Dorsolateral prefrontal cortex (tissue), 120 donors: ENCODE measurements at regions of chr1 and their contacts with region 1.

Region 1: DNA sequence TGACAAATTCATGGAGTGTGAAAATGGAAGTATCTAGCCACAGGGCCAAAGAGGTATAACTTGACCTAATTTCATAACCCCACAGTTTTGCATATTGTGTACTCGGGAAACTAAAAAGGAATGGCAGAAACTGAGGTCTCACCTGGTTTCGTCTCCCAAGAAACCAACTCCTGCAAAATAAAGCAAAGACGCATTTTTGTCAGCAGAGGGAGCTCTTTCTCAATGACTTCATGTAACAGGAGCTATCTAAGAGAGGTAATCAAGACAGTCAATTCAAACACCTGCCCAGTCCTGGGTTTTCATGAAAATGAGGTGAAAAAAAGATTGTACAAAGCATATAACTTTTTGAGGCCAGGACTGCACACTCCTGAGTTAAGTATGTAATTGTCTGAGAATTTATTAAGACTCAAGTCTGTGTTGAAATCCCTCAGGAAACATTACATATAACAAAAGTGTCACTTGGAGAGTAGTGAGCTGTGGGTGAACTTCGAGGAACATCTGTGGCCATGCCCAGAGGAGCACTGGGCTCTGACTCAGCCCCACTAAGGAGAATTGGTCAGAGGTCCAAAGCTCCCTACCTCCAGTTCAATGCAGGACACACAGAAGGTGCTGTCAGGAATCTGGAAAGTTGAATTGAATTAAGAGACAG is 17.6 kb downstream of the FCRL4 start:
- DNase-seq: peak in 1 of 10 donors; percentile 6
- H3K4me3 ChIP-seq: no peak overlapping the region
- H3K27ac ChIP-seq: no peak overlapping the region
- H3K27me3 ChIP-seq: peaks cover 0 to 22% (median 5%) of the 10 kb centered on the region in 45 donors
- CTCF ChIP-seq: peak; percentile 31 to 84 (median 69)

Region 2: DNA sequence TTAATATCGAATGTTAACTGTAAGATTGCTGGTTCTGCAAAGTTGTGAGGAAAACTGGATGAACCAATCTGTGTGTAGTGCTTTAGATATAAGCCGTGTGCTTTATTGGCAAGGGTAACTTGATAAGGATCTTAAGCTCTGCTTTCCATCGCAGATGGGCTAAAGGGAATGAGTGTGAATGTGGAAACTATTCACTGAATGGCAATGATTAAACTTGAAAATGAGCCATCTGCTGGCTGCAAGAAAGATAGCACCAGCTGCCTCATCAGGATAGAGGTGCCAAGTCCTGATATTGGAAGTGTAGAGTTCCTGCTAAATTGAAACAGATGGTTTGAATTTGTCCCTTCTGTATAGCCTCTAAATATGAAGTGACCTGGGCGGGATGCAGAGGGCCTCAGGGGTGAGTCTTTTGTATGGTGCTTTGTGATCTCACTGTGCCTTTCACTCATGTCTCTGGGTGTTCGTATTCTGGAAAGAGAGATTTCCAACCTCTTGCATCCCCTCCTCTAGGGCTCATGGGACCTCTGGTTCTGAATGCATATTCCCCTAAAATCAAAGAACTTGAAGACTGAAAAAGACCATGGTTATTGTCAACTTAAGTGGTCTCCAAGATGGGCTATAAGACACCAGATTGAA is 111.1 kb after region 1 on chr1:
- intact Hi-C with region 1: loop called in 1 of 2 experiments (anchors 5 kb)
- DNase-seq: peak in 1 of 10 donors; percentile 28
- H3K4me3 ChIP-seq: no peak overlapping the region
- H3K27ac ChIP-seq: no peak overlapping the region
- H3K27me3 ChIP-seq: peaks cover 0 to 9% (median 0%) of the 10 kb centered on the region in 45 donors
- CTCF ChIP-seq: peak in 53 of 56 donors; percentile 39 to 68 (median 52)

Region 3: DNA sequence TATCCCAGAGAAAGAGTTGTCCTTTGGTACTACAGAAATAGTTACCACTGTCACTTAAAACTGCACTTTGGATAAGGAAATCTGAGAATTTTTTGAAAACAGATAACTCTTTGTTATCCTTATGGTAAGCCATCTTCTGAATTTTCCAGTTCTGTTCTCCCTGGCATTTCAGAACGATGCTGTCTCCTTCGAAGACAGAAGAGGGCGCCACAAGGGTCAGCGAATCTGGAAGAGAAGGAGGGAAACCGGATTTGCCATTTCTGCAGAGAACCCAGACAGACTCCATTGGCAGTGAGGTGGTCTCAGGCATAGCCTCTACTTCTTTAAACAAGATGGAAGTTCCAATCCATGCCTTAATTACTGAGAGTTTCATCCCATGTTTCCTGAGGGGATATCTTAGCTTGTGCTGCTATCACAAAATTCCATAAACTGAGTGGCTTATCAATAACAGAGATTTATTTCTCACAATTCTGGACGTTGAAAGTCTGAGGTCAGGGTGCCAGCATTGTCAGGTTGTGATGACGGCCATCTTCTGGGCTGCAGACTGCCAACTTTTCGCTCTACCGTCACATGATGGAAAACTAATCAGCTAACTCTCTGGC is 190.2 kb after region 1 on chr1:
- intact Hi-C with region 1: no loop called
- DNase-seq: no peak
- H3K4me3 ChIP-seq: no peak overlapping the region
- H3K27ac ChIP-seq: no peak overlapping the region
- H3K27me3 ChIP-seq: peaks cover 0 to 11% (median 0%) of the 10 kb centered on the region in 45 donors
- CTCF ChIP-seq: peak in 1 of 56 donors; percentile 7

Region 4: DNA sequence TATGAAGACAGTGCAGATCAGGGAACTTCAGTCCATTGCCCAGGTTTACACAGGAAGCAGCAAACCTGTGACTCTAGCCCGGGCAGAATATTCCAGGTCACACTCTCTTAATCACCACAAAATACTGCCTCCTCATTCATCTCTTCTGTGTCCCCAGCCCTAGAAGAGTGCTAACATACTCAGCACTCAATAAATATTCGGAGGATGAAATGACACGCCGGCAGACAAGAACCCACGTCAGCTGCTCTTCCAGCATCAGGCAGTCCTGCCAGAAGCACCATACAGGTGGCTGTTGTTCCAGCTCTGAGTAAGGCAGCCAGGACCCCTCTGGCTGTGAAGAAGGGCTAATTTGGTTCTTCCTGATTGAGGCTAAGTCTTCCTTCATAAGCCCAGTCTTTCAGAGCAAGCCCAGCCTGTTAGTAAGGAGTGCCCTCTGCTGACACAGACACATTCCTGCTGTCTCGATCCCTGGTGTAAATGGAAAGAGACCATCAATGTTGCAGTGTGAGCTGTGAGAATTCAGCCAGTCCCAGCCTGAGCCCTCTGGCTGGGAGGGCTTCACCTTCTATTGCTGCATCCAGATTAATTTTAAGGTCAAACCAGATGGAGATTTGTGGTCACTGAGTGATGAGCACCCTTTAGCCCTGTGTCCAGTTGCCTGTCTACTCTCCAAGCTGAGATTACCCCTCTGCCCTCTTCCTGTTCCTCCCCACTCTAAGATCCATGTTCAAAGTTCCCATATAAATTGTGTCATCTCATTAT is 368.2 kb after region 1 on chr1:
- intact Hi-C with region 1: loop called in 1 of 2 experiments (anchors 2 kb)
- DNase-seq: peak in 2 of 10 donors; percentile 37 to 48
- H3K4me3 ChIP-seq: no peak overlapping the region
- H3K27ac ChIP-seq: no peak overlapping the region
- H3K27me3 ChIP-seq: peaks cover 0 to 21% (median 0%) of the 10 kb centered on the region in 45 donors
- CTCF ChIP-seq: peak in 54 of 56 donors; percentile 14 to 68 (median 46)

Region 5: DNA sequence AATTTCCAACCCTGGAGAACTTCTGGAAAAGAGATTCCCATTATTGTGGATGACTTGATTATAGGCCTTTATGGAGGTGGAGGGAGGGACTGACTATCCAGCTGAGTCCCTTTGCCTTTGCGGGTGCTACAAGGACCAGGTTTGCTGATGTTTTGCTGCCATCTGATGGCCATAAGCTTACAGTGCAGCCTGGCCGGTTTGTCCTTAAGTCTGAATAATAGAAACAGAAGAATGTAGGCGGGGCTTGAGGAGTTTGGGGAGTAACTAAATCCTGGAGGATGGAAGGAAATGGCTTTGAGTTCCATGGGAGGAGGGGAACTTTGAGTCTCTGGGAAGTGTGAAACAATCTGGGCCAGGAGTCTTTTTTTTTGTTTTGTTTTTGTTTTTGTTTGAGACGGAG is 544.7 kb after region 1 on chr1:
- intact Hi-C with region 1: loop called (anchors 10 kb)
- DNase-seq: peak; percentile 41 to 94 (median 82)
- H3K4me3 ChIP-seq: no peak overlapping the region
- H3K27ac ChIP-seq: no peak overlapping the region
- H3K27me3 ChIP-seq: peaks cover 0 to 11% (median 0%) of the 10 kb centered on the region in 45 donors
- CTCF ChIP-seq: peak; percentile 40 to 98 (median 93)